Activated CD8-positive, alpha-beta T cell treated with anti-CD3 and anti-CD28 coated beads for 36 hours (primary cell): ENCODE measurements at regions of chr5 and their contacts with region 1.

Region 1: DNA sequence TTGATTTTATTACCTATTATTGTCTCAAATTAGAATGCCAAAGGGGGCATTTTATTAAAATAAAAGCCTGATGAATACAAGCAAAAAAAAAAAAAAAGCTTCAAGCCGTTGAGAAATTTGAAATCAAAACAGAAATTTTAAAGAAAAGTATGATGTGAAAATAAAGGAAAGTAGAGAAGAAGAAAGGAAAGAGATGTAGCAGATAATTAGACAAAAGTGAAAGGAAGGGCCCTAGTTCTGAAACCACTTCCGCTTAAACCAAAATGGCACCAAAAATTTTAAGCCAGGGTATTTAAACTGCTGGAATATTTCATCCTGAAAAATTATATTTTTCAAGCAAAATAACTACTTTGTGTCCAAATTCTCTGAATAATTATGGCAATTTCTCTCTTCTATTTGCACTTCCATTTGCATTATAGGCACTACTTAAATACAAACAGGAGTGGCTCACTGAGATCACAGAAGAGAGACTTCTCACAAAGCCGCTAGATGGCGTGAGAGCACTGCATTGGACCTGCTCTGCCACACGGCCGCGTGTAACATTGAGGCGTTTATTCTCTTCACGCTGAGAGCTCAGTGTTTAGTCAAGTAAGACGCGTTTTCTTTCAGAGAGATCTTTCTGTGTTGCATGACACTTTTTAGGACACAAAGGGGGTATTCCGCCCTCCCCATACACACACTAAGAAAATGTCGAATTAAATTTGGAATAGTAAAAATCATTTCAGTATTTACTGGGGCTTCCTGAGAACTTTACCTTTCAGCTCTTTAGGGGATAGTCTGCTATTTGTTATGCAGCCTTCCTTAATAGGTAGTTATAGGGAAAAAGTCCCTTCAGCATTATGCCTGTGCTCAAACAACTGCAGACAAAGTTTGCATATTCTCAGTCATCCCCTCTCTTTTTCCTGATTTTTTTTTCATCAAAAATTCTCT is 368.4 kb upstream of the CCNH start:
- DNase-seq: peak; percentile 81
- ATAC-seq: peak; percentile 95
- H3K4me3 Mint-ChIP-seq: no peak overlapping the region
- H3K27ac Mint-ChIP-seq: no peak overlapping the region
- H3K4me1 Mint-ChIP-seq: peaks cover 2% of the 10 kb centered on the region
- H3K27me3 Mint-ChIP-seq: peaks cover 7% of the 10 kb centered on the region
- CTCF ChIP-seq: peak; percentile 89

Region 2: DNA sequence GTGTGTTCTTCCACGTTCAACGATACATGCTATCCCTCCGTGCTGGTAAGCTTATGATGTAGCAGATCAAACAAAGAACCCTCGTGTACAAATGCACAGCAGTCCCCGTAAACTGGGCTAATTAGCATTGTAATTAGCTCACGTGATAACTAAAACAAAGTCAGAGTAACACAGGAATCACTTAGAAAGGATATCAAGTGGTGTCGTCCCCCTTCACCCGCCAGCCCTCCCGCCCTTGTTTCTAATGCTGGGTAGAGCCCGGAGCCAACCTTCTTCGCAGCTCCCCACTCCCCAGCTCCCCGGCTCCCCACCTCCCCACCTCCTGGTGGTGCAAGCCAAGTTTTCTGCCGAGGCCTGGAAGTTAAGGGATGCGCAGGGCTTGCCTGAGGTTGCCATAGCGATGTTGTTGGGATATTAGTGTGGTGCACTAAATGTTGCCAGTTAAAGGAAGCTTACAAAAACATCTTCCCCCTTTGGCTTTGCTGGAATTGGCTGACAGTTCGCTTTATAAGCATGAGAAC is 10.4 kb before region 1 on chr5:
- CTCF ChIA-PET with region 1: interaction called, 20 read pairs
- POLR2A ChIA-PET with region 1: no interaction called
- intact Hi-C with region 1: no loop called
- DNase-seq: no peak
- ATAC-seq: no peak
- H3K4me3 Mint-ChIP-seq: no peak overlapping the region
- H3K27ac Mint-ChIP-seq: no peak overlapping the region
- H3K4me1 Mint-ChIP-seq: no peaks in the 10 kb centered on the region
- H3K27me3 Mint-ChIP-seq: peaks cover 18% of the 10 kb centered on the region
- CTCF ChIP-seq: no peak

Region 3: GRCh38 chr5:87791869-87792268 is 10.8 kb after region 1 on chr5:
- CTCF ChIA-PET with region 1: interaction called, 12 read pairs
- POLR2A ChIA-PET with region 1: no interaction called
- intact Hi-C with region 1: no loop called
- DNase-seq: no peak
- ATAC-seq: no peak
- H3K4me3 Mint-ChIP-seq: no peak overlapping the region
- H3K27ac Mint-ChIP-seq: no peak overlapping the region
- H3K4me1 Mint-ChIP-seq: no peaks in the 10 kb centered on the region
- H3K27me3 Mint-ChIP-seq: peaks cover 8% of the 10 kb centered on the region
- CTCF ChIP-seq: no peak

Region 4: GRCh38 chr5:88680253-88681132 is 899.4 kb after region 1 on chr5:
- CTCF ChIA-PET with region 1: interaction called, 49 read pairs
- POLR2A ChIA-PET with region 1: no interaction called
- intact Hi-C with region 1: no loop called
- DNase-seq: peak; percentile 77
- ATAC-seq: peak; percentile 77
- H3K4me3 Mint-ChIP-seq: peak overlapping the region; percentile 24
- H3K27ac Mint-ChIP-seq: no peak overlapping the region
- H3K4me1 Mint-ChIP-seq: peaks cover 11% of the 10 kb centered on the region
- H3K27me3 Mint-ChIP-seq: peaks cover 75% of the 10 kb centered on the region
- CTCF ChIP-seq: peak; percentile 96

Region 5: GRCh38 chr5:88729084-88729828 is 948.2 kb after region 1 on chr5:
- CTCF ChIA-PET with region 1: interaction called, 15 read pairs
- POLR2A ChIA-PET with region 1: no interaction called
- intact Hi-C with region 1: no loop called
- DNase-seq: peak; percentile 76
- ATAC-seq: peak; percentile 71
- H3K4me3 Mint-ChIP-seq: no peak overlapping the region
- H3K27ac Mint-ChIP-seq: no peak overlapping the region
- H3K4me1 Mint-ChIP-seq: peaks cover 5% of the 10 kb centered on the region
- H3K27me3 Mint-ChIP-seq: peaks cover 10% of the 10 kb centered on the region
- CTCF ChIP-seq: peak; percentile 80